Ascending aorta (tissue), 2 donors: ENCODE measurements at regions of chr15 and their contacts with region 1.

Region 1: DNA sequence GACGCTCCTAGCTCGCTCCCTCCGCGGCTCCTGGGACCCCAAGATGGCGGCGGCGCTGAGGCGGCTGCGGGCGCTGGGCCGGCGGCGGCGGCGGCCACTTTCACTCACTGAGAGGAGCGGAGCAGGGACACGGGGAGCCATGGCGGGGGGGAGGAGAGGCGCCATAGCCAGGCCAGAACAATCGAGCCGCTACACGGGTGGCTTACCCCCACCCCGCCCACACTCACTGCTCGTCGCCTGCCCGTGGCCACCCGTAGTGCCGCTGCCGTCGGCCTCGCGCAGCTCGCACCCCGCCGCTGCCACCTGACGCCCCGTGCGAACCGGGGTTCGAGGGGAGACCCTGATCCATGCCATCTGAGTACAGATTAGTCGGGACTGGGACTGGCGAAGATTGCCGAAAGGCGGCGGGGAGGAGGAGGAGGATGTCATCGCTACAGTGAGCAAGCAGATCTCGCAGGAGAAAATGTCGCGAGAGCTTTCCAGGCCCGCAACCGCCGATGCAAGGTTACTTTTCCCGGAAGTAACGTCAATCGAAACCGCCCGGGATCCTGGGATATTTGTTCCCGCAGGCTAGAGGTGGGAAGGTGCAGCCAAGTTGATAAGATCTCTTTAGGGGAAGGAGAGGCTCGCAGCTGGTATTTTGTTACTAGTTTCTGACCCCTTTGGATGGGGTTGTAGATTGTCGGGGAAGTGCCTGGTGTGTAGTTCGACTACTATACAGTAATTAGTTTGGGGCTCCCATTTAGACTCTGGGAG is at the start of gene INO80:
- DNase-seq: peak; percentile 85 to 98
- H3K4me3 ChIP-seq: peak within 1 kb of the TSS; percentile 83 to 85
- H3K27ac ChIP-seq: peak within 1 kb of the TSS; percentile 97 to 98
- H3K4me1 ChIP-seq: peaks cover 0 to 11% of the 10 kb centered on the region in 2 donors
- H3K27me3 ChIP-seq: no peaks in the 10 kb centered on the region
- CTCF ChIP-seq: no peak
- total RNA-seq, gene INO80: 57.8 TPM

Region 2: DNA sequence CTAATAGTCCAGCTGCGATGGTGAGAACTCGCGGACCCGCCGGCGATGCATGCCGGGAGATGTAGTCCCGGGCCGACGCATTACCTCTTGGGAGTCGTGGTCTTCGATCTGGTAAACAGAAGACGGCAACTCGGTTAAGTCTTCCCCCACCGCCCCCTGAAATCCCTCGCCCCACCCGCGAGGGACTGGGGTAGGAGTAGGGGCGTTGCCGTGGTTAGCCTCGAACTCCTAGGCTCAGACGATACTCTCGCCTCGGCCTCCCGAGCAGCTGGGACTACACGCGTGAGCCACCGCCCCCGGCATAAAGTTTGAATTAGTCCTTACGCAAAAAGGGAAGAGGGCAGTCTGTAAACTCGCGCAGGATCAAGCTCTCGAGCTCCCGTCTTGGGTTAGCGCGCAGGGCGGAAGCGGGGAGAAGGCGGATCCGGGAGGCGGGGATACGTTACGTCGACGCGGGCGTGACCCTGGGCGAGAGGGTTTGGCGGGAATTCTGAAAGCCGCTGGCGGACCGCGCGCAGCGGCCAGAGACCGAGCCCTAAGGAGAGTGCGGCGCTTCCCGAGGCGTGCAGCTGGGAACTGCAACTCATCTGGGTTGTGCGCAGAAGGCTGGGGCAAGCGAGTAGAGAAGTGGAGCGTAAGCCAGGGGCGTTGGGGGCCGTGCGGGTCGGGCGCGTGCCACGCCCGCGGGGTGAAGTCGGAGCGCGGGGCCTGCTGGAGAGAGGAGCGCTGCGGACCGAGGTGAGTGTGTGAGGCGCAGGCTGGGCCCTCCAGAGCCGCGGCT is 421.4 kb before region 1 on chr15 and contains the start of gene RAD51:
- intact Hi-C with region 1: loop called (anchors 10 kb)
- DNase-seq: peak; percentile 70 to 94
- H3K4me3 ChIP-seq: peak within 1 kb of the TSS; percentile 82 to 99
- H3K27ac ChIP-seq: peak within 1 kb of the TSS; percentile 99
- H3K4me1 ChIP-seq: peaks cover 0 to 8% of the 10 kb centered on the region in 2 donors
- H3K27me3 ChIP-seq: no peaks in the 10 kb centered on the region
- CTCF ChIP-seq: no peak
- total RNA-seq, gene RAD51: not detected

Region 3: GRCh38 chr15:40941528-40942336 is 174.6 kb before region 1 on chr15:
- intact Hi-C with region 1: loop called (anchors 5 kb)
- DNase-seq: peak in 1 of 2 donors; percentile 84
- H3K4me3 ChIP-seq: peak overlapping the region; percentile 69 to 70
- H3K27ac ChIP-seq: peak overlapping the region; percentile 77 to 88
- H3K4me1 ChIP-seq: peaks cover 0 to 17% of the 10 kb centered on the region in 2 donors
- H3K27me3 ChIP-seq: no peaks in the 10 kb centered on the region
- CTCF ChIP-seq: peak in 2 of 3 experiments; percentile 32 to 94

Region 4: GRCh38 chr15:41180206-41180789 is 64.0 kb after region 1 on chr15:
- intact Hi-C with region 1: no loop called
- DNase-seq: no peak
- H3K4me3 ChIP-seq: no peak overlapping the region
- H3K27ac ChIP-seq: no peak overlapping the region
- H3K4me1 ChIP-seq: no peaks in the 10 kb centered on the region
- H3K27me3 ChIP-seq: no peaks in the 10 kb centered on the region
- CTCF ChIP-seq: no peak

Region 5: DNA sequence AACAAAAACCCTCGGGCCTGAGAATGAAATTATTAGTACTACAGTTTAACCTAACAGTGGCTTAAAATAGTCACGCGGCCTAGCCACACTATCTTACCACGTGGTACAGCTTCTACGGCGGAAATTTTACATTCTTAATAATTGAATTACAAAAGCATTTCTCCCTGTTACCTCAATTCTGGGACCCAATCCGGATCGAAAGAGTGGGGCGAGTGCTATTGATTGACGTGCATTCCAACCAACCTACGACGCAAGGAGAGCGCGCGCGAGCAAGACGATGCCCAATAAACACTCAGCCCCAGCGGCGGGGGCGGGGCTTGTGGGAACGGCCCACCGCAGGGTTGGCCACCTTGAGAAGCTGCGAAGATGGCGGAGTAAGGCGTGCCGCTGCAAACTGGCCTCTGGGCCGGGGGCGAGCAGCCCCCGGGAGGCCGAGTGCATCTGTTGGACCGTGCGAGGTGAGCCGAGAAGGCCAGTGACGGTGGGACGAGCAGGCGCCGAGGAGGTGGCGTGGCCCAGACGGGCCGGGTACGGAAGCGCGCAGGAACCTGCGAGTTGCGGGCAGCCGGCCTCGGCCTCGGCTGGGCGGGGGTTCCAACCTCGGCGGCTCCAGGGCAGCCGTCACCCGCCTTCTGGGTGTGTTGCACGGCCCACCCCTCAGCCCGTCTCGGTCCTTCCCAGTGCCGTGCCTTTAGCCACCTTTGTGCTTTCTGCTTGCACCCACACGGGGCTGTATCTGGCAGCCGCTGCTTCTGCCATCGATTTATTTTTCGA is 167.5 kb after region 1 on chr15:
- intact Hi-C with region 1: loop called (anchors 1 kb)
- DNase-seq: peak; percentile 89 to 99
- H3K4me3 ChIP-seq: peak overlapping the region; percentile 72 to 88
- H3K27ac ChIP-seq: peak overlapping the region; percentile 83 to 84
- H3K4me1 ChIP-seq: peaks cover 6 to 16% of the 10 kb centered on the region in 2 donors
- H3K27me3 ChIP-seq: no peaks in the 10 kb centered on the region
- CTCF ChIP-seq: no peak

Region 6: GRCh38 chr15:41416742-41417406 is 300.6 kb after region 1 on chr15 and contains the start of gene RTF1:
- intact Hi-C with region 1: loop called (anchors 5 kb)
- DNase-seq: peak; percentile 68 to 96
- H3K4me3 ChIP-seq: peak within 1 kb of the TSS; percentile 70 to 86
- H3K27ac ChIP-seq: peak within 1 kb of the TSS; percentile 73 to 80
- H3K4me1 ChIP-seq: peaks cover 7 to 13% of the 10 kb centered on the region in 2 donors
- H3K27me3 ChIP-seq: no peaks in the 10 kb centered on the region
- CTCF ChIP-seq: no peak
- total RNA-seq, gene RTF1: 9.4 TPM